Naive thymus-derived CD4-positive, alpha-beta T cell (primary cell): ENCODE measurements at regions of chr22 and their contacts with region 1.

Region 1: DNA sequence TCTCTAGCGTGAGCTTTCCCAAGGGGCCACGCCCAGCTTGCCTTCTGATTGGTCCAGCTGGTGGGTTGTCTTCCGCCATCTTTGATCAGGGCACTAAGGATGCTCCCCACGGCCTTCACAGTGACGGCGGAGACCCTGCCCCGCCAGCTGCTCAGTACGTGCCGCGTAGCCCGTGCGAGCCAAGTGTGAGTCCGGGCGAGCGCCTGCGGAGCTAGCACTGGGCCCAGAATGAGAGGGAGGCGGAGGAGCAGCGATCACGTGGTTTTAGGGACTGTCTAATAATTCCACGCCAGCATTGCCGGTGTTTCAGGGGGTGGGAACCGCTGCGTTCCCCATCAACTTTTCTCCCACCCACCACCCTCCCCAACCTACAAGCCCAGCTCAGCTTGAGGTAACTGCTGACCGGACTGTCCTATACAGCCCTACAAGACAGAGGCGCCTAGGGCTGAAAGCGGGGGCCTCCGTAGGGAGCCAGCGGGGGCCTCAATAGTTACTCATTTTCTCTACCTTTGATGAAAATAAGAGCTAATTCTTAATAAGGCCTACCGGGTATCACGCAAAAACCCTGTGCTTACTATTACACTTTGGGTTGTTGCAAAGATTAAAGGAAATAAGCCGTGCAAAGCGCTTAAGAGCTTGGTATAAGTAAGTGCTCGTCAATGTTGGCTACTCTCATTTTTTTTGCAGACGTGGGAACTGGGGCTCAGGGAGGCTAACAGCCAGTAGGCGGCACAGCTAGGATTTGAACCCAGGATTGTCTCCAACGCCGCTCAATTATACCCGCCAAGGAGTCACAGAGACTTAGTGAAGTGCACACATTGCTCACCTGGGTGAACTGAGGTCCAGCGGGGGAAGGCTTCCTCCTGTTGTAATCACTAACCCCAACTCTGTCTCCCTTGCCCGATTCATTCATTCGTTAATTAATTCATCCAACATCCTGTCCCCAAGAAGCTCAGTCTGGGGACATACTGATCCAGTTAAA is 1.3 kb upstream of the MTFP1 start:
- DNase-seq: peak; percentile 82 to 99 (median 98)
- ATAC-seq: peak; percentile 92
- H3K4me3 ChIP-seq: peak overlapping the region; percentile 76
- H3K4me3 Mint-ChIP-seq: peak overlapping the region; percentile 94 to 99 (median 98)
- H3K27ac ChIP-seq: peak overlapping the region; percentile 97
- H3K27ac Mint-ChIP-seq: peak overlapping the region; percentile 96 to 100 (median 98)
- H3K4me1 ChIP-seq: peaks cover 28 to 36% of the 10 kb centered on the region in 2 donors
- H3K4me1 Mint-ChIP-seq: peaks cover 30 to 71% (median 64%) of the 10 kb centered on the region in 7 donors
- H3K27me3 ChIP-seq: no peaks in the 10 kb centered on the region
- H3K27me3 Mint-ChIP-seq: peaks cover 0 to 4% (median 0%) of the 10 kb centered on the region in 5 donors

Region 2: DNA sequence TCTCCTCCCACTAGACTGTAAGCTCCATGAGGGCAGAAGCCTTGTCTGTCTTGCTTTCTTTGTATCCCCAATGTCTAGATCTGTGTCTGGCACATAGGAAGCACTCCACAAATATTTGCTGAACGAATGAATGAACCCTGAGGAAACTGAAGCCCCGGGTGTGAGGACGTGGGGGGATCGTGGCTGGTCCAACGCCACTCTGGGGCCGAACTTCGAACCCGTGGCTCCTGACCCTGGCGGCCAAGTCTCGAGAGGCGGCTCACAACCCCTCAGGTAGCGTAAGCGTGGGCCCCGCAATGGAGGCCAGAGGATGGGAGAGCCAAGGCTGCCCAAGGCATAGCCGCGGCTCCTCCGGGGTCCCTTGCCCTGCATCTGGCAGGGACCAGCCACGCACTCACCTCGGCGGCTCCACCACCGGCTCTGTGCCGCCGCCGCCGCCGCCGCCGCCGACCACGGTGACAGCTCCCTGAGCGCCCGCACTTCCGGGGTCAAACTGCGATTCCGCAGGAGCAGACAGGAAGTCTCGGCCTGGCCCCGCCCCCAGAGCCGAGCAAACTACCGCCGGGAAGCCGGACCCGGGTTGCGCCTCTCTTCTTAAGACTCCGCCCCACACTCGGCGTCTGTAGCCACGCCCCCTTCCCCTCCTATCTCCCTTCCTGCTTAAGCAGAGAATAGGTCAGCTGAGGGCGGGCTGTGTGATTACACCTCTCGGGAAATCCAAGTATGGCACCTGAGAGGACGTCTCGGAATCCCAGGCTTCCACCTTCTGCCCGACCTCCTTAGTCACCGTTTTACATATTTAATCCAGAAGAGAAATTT is 586.3 kb before region 1 on chr22 and contains the start of gene ASCC2:
- CTCF ChIA-PET with region 1: no interaction called
- POLR2A ChIA-PET with region 1: no interaction called
- intact Hi-C with region 1: loop called (anchors 2 to 5 kb)
- DNase-seq: peak; percentile 93 to 98 (median 97)
- ATAC-seq: peak; percentile 100
- H3K4me3 ChIP-seq: peak within 1 kb of the TSS; percentile 98
- H3K4me3 Mint-ChIP-seq: peak within 1 kb of the TSS; percentile 89 to 99 (median 95)
- H3K27ac ChIP-seq: peak within 1 kb of the TSS; percentile 79
- H3K27ac Mint-ChIP-seq: peak within 1 kb of the TSS; percentile 94 to 99 (median 95)
- H3K4me1 ChIP-seq: peaks cover 12 to 22% of the 10 kb centered on the region in 2 donors
- H3K4me1 Mint-ChIP-seq: peaks cover 31 to 55% (median 45%) of the 10 kb centered on the region in 7 donors
- H3K27me3 ChIP-seq: no peaks in the 10 kb centered on the region
- H3K27me3 Mint-ChIP-seq: no peaks in the 10 kb centered on the region
- total RNA-seq, gene ASCC2: 90.2 to 101 (median 93.8) TPM

Region 3: GRCh38 chr22:30356449-30357235 is 67.6 kb before region 1 on chr22 and contains the starts of genes CCDC157 and SF3A1:
- CTCF ChIA-PET with region 1: interaction called, 3 read pairs
- POLR2A ChIA-PET with region 1: interaction called, 13 read pairs
- intact Hi-C with region 1: loop called (anchors 1 kb)
- DNase-seq: peak; percentile 78 to 90 (median 86)
- ATAC-seq: peak; percentile 94
- H3K4me3 ChIP-seq: peak within 1 kb of the TSS; percentile 94
- H3K4me3 Mint-ChIP-seq: peak within 1 kb of the TSS; percentile 92 to 99 (median 95)
- H3K27ac ChIP-seq: peak within 1 kb of the TSS; percentile 100
- H3K27ac Mint-ChIP-seq: peak within 1 kb of the TSS; percentile 86 to 99 (median 95)
- H3K4me1 ChIP-seq: peaks cover 32 to 37% of the 10 kb centered on the region in 2 donors
- H3K4me1 Mint-ChIP-seq: peaks cover 35 to 62% (median 54%) of the 10 kb centered on the region in 7 donors
- H3K27me3 ChIP-seq: no peaks in the 10 kb centered on the region
- H3K27me3 Mint-ChIP-seq: peaks cover 0 to 6% (median 0%) of the 10 kb centered on the region in 5 donors
- total RNA-seq, gene CCDC157: 1.8 to 6.9 (median 3.2) TPM
- total RNA-seq, gene SF3A1: 267 to 341 (median 284) TPM

Region 4: DNA sequence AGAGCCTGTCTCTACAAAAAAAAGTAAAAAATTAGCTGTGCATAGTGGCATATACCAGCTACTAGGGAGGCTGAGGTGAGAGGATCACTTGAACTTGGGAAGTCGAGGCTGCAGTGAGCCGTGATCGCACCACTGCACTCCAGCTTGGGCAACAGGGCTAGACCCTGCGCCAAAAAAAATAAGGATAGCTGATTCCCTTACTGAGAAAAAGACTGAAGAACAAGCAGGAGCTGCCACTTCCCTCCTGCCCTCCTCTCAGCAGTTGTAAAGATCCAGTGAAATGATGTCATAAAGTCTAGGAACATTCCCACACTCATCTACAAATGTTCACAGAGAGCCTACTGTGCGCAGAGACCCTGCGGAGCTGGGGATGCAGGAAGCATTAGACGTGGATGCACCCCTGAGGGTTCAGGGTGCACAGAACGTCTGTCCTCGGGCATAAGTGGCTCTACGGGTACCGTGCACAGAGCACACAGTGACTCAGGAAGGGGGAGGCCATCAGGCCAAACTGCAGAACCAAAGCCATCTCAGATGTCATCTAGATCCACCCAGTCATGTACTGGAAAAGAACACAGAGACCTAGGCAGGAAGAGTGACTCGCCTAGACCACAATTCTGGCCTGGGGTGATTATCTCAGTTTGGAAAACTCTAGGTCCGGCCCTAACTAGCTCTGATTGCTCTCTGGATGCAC is 15.7 kb before region 1 on chr22:
- CTCF ChIA-PET with region 1: interaction called, 19 read pairs
- POLR2A ChIA-PET with region 1: interaction called, 90 read pairs
- intact Hi-C with region 1: no loop called
- DNase-seq: no peak
- ATAC-seq: no peak
- H3K4me3 ChIP-seq: no peak overlapping the region
- H3K4me3 Mint-ChIP-seq: no peak overlapping the region
- H3K27ac ChIP-seq: no peak overlapping the region
- H3K27ac Mint-ChIP-seq: peak overlapping the region in 4 of 9 donors; percentile 17 to 41 (median 22)
- H3K4me1 ChIP-seq: peaks cover 0 to 18% of the 10 kb centered on the region in 2 donors
- H3K4me1 Mint-ChIP-seq: peaks cover 12 to 37% (median 27%) of the 10 kb centered on the region in 7 donors
- H3K27me3 ChIP-seq: no peaks in the 10 kb centered on the region
- H3K27me3 Mint-ChIP-seq: no peaks in the 10 kb centered on the region

Region 5: GRCh38 chr22:30485362-30485988 is 61.2 kb after region 1 on chr22:
- CTCF ChIA-PET with region 1: interaction called, 3 read pairs
- POLR2A ChIA-PET with region 1: no interaction called
- intact Hi-C with region 1: loop called in 1 of 2 experiments (anchors 1 kb)
- DNase-seq: peak; percentile 61 to 84 (median 70)
- ATAC-seq: peak; percentile 98
- H3K4me3 ChIP-seq: no peak overlapping the region
- H3K4me3 Mint-ChIP-seq: no peak overlapping the region
- H3K27ac ChIP-seq: no peak overlapping the region
- H3K27ac Mint-ChIP-seq: peak overlapping the region in 3 of 9 donors; percentile 2 to 45 (median 9)
- H3K4me1 ChIP-seq: no peaks in the 10 kb centered on the region
- H3K4me1 Mint-ChIP-seq: peaks cover 0 to 2% (median 0%) of the 10 kb centered on the region in 7 donors
- H3K27me3 ChIP-seq: no peaks in the 10 kb centered on the region
- H3K27me3 Mint-ChIP-seq: peaks cover 0 to 4% (median 0%) of the 10 kb centered on the region in 5 donors

Region 6: GRCh38 chr22:31496007-31496734 is 1071.9 kb after region 1 on chr22 and contains the start of gene SFI1:
- CTCF ChIA-PET with region 1: no interaction called
- POLR2A ChIA-PET with region 1: no interaction called
- intact Hi-C with region 1: loop called in 1 of 2 experiments (anchors 10 kb)
- DNase-seq: peak; percentile 91 to 98 (median 96)
- ATAC-seq: peak; percentile 93
- H3K4me3 ChIP-seq: peak within 1 kb of the TSS; percentile 83
- H3K4me3 Mint-ChIP-seq: peak within 1 kb of the TSS; percentile 85 to 99 (median 96)
- H3K27ac ChIP-seq: peak within 1 kb of the TSS; percentile 92
- H3K27ac Mint-ChIP-seq: peak within 1 kb of the TSS; percentile 92 to 99 (median 98)
- H3K4me1 ChIP-seq: peaks cover 18 to 20% of the 10 kb centered on the region in 2 donors
- H3K4me1 Mint-ChIP-seq: peaks cover 7 to 50% (median 43%) of the 10 kb centered on the region in 7 donors
- H3K27me3 ChIP-seq: no peaks in the 10 kb centered on the region
- H3K27me3 Mint-ChIP-seq: no peaks in the 10 kb centered on the region
- total RNA-seq, gene SFI1: 196 to 359 (median 343) TPM